ENCODE measurements at regions of chr1 and their contacts with region 1.

Region 1: DNA sequence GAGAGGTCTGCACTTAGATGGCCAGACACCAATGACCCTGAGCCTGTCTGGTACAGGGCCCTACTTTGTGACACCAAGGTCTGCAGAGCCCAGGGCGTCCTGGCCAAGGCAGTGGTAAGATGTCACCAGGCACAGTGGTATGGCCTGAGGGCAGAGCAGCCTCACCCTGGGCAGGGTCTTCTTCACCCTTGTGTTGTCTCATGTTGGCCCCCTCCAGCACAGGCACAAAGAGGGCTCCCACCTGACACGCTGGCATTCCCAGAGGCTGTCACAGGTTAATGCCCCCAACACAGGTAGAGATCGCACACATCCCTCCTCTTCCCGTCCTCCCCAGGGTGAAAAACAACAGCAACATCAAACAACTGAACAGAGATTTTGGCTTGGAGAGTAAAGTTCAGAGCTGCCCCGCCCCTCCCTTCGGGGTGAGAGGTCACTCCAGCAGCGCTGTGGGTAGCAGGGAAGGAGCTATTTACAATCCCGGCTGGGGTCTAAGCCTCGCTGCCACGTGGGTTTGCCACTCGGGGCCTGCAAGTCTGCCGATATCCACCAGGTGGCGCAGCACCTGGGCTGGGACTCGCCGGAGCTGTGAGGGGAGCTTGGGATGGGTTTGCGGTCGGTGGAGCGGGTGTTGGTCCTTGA is 12.6 kb downstream of the EFNA3 start:
- DNase-seq: peak; percentile 94

Region 2: GRCh38 chr1:155127105-155127964 is 36.1 kb after region 1 on chr1 and contains the start of gene EFNA1:
- intact Hi-C with region 1: loop called (anchors 1 to 5 kb)
- DNase-seq: peak; percentile 87
- total RNA-seq, gene EFNA1: 12.6 to 13.2 TPM

Region 3: GRCh38 chr1:155167166-155168104 is 76.2 kb after region 1 on chr1:
- intact Hi-C with region 1: loop called (anchors 2 to 5 kb)
- DNase-seq: peak; percentile 96

Region 4: GRCh38 chr1:155178441-155179111 is 87.4 kb after region 1 on chr1:
- intact Hi-C with region 1: no loop called
- DNase-seq: peak; percentile 78